Body of pancreas (tissue), 4 donors: ENCODE measurements at regions of chr1 and their contacts with region 1.

Region 1: GRCh38 chr1:17043656-17044055 is 10.2 kb downstream of the SDHB start:
- DNase-seq: no peak
- ATAC-seq: no peak
- H3K4me3 ChIP-seq: no peak overlapping the region
- H3K27ac ChIP-seq: no peak overlapping the region
- H3K4me1 ChIP-seq: peaks cover 14% of the 10 kb centered on the region
- H3K27me3 ChIP-seq: no peaks in the 10 kb centered on the region
- CTCF ChIP-seq: no peak
- POLR2A ChIP-seq: no peak

Region 2: DNA sequence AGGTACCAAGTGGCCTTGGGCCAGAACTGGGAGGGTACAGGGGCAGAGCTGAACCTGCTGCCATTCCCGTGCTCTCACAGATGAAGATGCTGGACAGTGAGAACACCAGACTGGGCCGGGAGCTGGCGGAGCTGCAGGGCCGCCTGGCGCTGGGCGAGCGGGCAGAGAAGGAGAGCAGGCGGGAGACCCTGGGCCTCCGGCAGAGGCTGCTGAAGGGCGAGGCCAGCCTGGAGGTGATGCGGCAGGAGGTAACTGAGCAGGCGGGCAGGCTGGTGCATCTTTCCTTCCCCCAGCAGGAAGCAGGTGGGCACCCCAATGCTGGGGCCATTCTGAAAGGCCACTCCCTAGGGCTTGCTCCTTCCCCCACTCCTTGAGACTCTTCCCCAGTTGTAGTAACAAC is 85.2 kb before region 1 on chr1:
- intact Hi-C with region 1: loop called (anchors 5 kb)
- DNase-seq: no peak
- ATAC-seq: no peak
- H3K4me3 ChIP-seq: no peak overlapping the region
- H3K27ac ChIP-seq: no peak overlapping the region
- H3K4me1 ChIP-seq: peaks cover 17% of the 10 kb centered on the region
- H3K27me3 ChIP-seq: no peaks in the 10 kb centered on the region
- CTCF ChIP-seq: no peak
- POLR2A ChIP-seq: no peak